ENCODE measurements at regions of chr11 and their contacts with region 1.

Region 1: GRCh38 chr11:62394825-62395538 is 23.9 kb upstream of the SCGB1A1 start:
- DNase-seq: peak; percentile 70
- H3K4me3 ChIP-seq: peak overlapping the region in 1 of 4 donors; percentile 32
- H3K27ac ChIP-seq: peak overlapping the region; percentile 67 to 89 (median 76)
- H3K4me1 ChIP-seq: peaks cover 23 to 44% (median 26%) of the 10 kb centered on the region in 4 donors
- H3K27me3 ChIP-seq: no peaks in the 10 kb centered on the region
- CTCF ChIP-seq: peak; percentile 65 to 76 (median 70)
- EP300 ChIP-seq: no peak
- POLR2A ChIP-seq: no peak

Region 2: GRCh38 chr11:61797263-61797944 is 597.6 kb before region 1 on chr11:
- in situ Hi-C with region 1: no loop called
- intact Hi-C with region 1: no loop called
- DNase-seq: peak; percentile 83
- H3K4me3 ChIP-seq: no peak overlapping the region
- H3K27ac ChIP-seq: peak overlapping the region in 2 of 4 donors; percentile 17 to 34
- H3K4me1 ChIP-seq: peaks cover 0 to 15% (median 10%) of the 10 kb centered on the region in 4 donors
- H3K27me3 ChIP-seq: no peaks in the 10 kb centered on the region
- CTCF ChIP-seq: peak; percentile 73 to 90 (median 80)
- EP300 ChIP-seq: no peak
- POLR2A ChIP-seq: no peak

Region 3: DNA sequence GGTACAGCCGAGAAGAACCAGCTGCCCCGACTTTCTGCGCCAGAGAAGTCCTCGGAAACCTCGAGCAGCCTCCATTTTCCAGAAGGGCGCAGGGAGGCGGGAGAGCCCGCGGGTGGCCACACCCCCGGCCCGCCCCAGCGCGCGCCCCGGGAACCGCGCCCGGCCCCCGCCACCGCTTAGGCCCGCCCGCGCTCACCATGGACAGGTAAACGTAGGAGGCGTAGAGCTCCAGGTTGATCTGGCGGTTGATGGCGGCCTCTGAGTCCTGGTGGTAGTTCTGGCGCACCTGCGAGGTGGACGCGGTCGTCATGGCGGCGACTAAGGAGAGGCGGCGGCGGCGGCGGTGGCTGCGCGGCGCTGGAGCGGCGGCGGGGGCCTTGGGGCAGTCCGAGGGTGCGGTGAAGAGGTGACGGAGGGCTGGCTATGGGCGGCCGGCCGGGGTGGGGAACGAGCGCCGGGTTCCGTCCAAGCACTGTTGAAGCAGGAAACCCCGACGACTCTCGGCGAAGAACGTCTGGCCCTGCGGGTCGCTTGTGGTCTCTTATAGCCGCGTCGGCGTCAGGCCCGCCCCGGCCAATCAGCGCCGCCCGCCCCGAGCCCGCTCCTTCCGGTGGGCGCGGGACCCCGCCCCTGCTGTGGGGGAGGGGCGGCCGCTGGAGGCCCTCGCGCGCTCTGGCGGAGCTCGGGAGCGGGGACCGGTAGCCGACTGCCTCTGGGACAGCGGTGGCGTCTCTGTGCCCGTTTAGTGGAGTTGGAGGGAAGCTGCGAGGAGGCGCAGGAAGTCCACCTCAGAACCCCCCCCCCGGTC is 427.7 kb before region 1 on chr11 and contains the start of gene FTH1:
- in situ Hi-C with region 1: no loop called
- intact Hi-C with region 1: no loop called
- DNase-seq: peak; percentile 96
- H3K4me3 ChIP-seq: peak within 1 kb of the TSS; percentile 82 to 95 (median 91)
- H3K27ac ChIP-seq: peak within 1 kb of the TSS; percentile 99 to 100 (median 100)
- H3K4me1 ChIP-seq: peaks cover 32 to 78% (median 69%) of the 10 kb centered on the region in 4 donors
- H3K27me3 ChIP-seq: no peaks in the 10 kb centered on the region
- CTCF ChIP-seq: no peak
- EP300 ChIP-seq: no peak
- POLR2A ChIP-seq: peak; percentile 100
- total RNA-seq, gene FTH1: 2,288 to 6,007 (median 4,694) TPM

Region 4: GRCh38 chr11:62179995-62180394 is 215.0 kb before region 1 on chr11:
- in situ Hi-C with region 1: no loop called
- intact Hi-C with region 1: no loop called
- DNase-seq: no peak
- H3K4me3 ChIP-seq: no peak overlapping the region
- H3K27ac ChIP-seq: no peak overlapping the region
- H3K4me1 ChIP-seq: peaks cover 0 to 6% (median 0%) of the 10 kb centered on the region in 4 donors
- H3K27me3 ChIP-seq: peaks cover 36% of the 10 kb centered on the region
- CTCF ChIP-seq: no peak
- EP300 ChIP-seq: no peak
- POLR2A ChIP-seq: no peak

Region 5: DNA sequence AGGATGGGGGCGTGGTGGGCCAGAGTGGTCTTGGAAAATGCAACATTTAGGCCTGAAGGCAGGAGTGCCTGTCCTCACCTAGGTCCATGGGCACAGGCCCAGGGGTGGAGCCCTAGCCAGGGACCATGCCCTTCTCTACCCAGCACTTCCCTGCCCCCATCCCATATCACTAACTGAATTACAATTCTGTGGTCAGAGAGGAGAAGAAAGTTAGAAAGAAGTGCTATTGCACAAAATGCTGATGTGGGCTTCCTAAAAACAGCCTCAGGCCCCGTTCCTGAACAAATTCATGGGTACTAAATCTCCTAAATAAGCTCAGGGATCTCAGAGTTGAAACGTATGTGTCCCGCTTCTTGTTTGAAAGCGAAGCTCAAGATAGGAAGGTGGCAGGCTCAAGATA is 61.2 kb before region 1 on chr11:
- in situ Hi-C with region 1: no loop called
- intact Hi-C with region 1: no loop called
- DNase-seq: no peak
- H3K4me3 ChIP-seq: no peak overlapping the region
- H3K27ac ChIP-seq: no peak overlapping the region
- H3K4me1 ChIP-seq: peaks cover 5 to 11% (median 7%) of the 10 kb centered on the region in 4 donors
- H3K27me3 ChIP-seq: no peaks in the 10 kb centered on the region
- CTCF ChIP-seq: no peak
- EP300 ChIP-seq: no peak
- POLR2A ChIP-seq: no peak

Region 6: GRCh38 chr11:62542750-62543567 is 148.0 kb after region 1 on chr11:
- in situ Hi-C with region 1: no loop called
- intact Hi-C with region 1: loop called (anchors 10 kb)
- DNase-seq: peak; percentile 87
- H3K4me3 ChIP-seq: peak overlapping the region; percentile 74 to 96 (median 80)
- H3K27ac ChIP-seq: peak overlapping the region; percentile 96 to 100 (median 97)
- H3K4me1 ChIP-seq: peaks cover 52 to 80% (median 71%) of the 10 kb centered on the region in 4 donors
- H3K27me3 ChIP-seq: no peaks in the 10 kb centered on the region
- CTCF ChIP-seq: peak; percentile 99 to 100 (median 99)
- EP300 ChIP-seq: no peak
- POLR2A ChIP-seq: no peak

Region 7: DNA sequence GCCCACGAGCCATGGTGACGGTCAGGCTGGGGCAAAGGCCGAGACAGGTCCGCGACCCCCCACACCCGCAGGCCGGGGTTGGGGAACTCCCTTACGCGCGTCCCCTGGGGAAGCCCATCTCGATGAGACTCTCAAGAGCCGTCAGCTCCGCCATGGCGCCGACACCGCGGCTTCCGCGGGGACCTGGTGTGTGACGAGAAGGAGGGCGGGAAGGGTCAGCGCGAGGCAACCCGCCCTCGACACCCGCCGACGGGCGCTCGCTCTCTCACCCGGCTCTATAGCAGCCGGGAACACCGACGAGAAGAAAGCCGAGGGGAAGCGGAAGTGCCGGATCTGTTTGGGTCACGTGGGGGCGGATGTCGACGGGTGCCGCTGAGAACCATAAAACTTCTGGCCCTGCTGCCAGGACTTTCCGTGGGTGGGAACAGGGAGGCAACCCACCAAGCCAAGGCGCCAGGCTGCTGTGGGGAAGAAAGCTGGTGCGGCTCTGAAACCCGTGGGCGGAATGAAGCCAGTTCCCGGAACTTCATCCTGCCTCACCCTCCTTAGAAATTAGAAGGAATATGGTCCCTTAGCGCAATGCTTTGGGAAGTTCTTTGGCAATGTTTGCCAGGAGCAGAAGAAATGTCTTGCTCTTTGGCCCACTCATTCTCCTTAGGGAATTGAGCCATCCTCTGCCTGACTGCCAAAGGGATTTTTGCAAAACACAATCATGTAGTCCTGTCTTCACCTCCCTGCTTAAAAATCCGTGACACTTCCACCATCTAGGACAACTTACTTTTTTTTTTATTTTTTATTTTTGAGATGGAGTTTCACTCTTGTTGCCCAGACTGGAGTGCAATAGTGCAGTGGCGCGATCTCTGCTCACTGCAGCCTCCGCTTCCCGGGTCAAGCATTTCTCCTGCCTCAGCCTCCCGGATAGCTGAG is 284.1 kb after region 1 on chr11 and contains the start of gene UBXN1:
- in situ Hi-C with region 1: loop called in 2 of 4 experiments (anchors 25 kb)
- intact Hi-C with region 1: loop called (anchors 10 kb)
- DNase-seq: peak; percentile 92
- H3K4me3 ChIP-seq: peak within 1 kb of the TSS; percentile 81 to 88 (median 86)
- H3K27ac ChIP-seq: peak within 1 kb of the TSS; percentile 89 to 95 (median 94)
- H3K4me1 ChIP-seq: peaks cover 14 to 28% (median 16%) of the 10 kb centered on the region in 4 donors
- H3K27me3 ChIP-seq: no peaks in the 10 kb centered on the region
- CTCF ChIP-seq: no peak
- EP300 ChIP-seq: no peak
- POLR2A ChIP-seq: peak; percentile 81
- total RNA-seq, gene UBXN1: 129 to 219 (median 142) TPM

Region 8: DNA sequence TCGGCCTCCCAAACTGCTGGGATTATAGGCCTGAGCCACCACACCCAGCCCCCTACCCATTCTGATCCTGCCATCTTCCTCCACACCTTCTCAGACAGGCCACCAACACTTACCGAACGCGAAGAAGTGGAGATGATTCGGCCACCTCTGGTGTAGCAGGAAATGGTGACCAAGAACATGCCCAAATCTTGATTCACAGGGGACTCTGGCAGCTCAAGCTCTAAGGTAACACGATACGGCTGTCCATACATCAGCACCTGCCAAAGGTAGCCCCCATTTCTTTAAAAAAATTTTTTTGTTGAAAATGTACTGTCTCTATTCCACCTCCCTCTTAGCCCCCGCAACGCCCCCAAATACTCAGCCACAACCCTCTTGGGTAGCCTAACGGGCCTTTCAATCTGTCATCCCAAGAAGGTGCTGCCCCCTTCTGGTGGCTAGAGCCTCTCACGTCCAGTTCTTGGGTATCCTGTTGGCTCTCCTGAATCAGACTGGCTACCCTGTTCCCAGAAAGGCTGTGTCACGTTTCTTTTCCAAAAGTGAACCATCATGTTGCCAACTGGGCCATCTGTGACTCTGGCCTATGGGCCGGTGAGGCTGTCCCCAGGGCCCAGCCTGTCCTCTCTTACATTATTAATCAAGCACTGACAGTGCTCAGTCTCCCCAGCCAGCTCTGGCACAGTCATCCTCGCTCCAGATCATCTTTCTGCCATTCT is 299.6 kb after region 1 on chr11:
- in situ Hi-C with region 1: loop called in 3 of 4 experiments (anchors 10 to 25 kb)
- intact Hi-C with region 1: loop called (anchors 10 kb)
- DNase-seq: peak; percentile 85
- H3K4me3 ChIP-seq: no peak overlapping the region
- H3K27ac ChIP-seq: no peak overlapping the region
- H3K4me1 ChIP-seq: peaks cover 0 to 7% (median 0%) of the 10 kb centered on the region in 4 donors
- H3K27me3 ChIP-seq: no peaks in the 10 kb centered on the region
- CTCF ChIP-seq: peak; percentile 64 to 85 (median 83)
- EP300 ChIP-seq: no peak
- POLR2A ChIP-seq: no peak

Region 9: GRCh38 chr11:62855571-62856332 is 460.8 kb after region 1 on chr11:
- in situ Hi-C with region 1: loop called in 2 of 4 experiments (anchors 25 kb)
- intact Hi-C with region 1: no loop called
- DNase-seq: peak; percentile 98
- H3K4me3 ChIP-seq: peak overlapping the region; percentile 51 to 74 (median 70)
- H3K27ac ChIP-seq: peak overlapping the region; percentile 83 to 89 (median 85)
- H3K4me1 ChIP-seq: peaks cover 11 to 43% (median 24%) of the 10 kb centered on the region in 4 donors
- H3K27me3 ChIP-seq: no peaks in the 10 kb centered on the region
- CTCF ChIP-seq: peak in 1 of 5 experiments; percentile 27
- EP300 ChIP-seq: no peak
- POLR2A ChIP-seq: peak; percentile 99

Region 10: DNA sequence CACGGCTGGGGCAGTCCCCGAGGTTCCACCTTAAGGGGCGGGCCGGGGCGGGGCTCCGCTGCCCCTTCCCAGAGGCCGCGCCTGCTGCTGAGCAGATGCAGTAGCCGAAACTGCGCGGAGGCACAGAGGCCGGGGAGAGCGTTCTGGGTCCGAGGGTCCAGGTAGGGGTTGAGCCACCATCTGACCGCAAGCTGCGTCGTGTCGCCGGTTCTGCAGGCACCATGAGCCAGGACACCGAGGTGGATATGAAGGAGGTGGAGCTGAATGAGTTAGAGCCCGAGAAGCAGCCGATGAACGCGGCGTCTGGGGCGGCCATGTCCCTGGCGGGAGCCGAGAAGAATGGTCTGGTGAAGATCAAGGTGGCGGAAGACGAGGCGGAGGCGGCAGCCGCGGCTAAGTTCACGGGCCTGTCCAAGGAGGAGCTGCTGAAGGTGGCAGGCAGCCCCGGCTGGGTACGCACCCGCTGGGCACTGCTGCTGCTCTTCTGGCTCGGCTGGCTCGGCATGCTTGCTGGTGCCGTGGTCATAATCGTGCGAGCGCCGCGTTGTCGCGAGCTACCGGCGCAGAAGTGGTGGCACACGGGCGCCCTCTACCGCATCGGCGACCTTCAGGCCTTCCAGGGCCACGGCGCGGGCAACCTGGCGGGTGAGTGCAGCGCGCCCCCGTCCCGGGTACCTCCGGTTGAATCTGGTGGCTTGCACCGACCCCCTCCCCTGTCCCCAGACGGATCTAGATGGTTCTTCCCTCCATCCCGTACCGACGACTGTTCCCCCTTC is 486.0 kb after region 1 on chr11 and contains the start of gene SLC3A2:
- in situ Hi-C with region 1: loop called in 1 of 4 experiments (anchors 25 kb)
- intact Hi-C with region 1: no loop called
- DNase-seq: peak; percentile 94
- H3K4me3 ChIP-seq: peak within 1 kb of the TSS; percentile 64 to 96 (median 78)
- H3K27ac ChIP-seq: peak within 1 kb of the TSS; percentile 96 to 100 (median 98)
- H3K4me1 ChIP-seq: peaks cover 33 to 53% (median 39%) of the 10 kb centered on the region in 4 donors
- H3K27me3 ChIP-seq: no peaks in the 10 kb centered on the region
- CTCF ChIP-seq: peak; percentile 45 to 75 (median 65)
- EP300 ChIP-seq: peak; percentile 32
- POLR2A ChIP-seq: peak; percentile 99
- total RNA-seq, gene SLC3A2: 32.4 to 163 (median 129) TPM

Measured in transverse colon (tissue), 4 donors.